Ovary (tissue), 10 donors: ENCODE measurements at regions of chr5 and their contacts with region 1.

Region 1: GRCh38 chr5:32174011-32174870 is at the start of gene GOLPH3:
- DNase-seq: peak; percentile 93 to 96 (median 95)
- H3K4me3 ChIP-seq: peak within 1 kb of the TSS; percentile 92
- H3K27ac ChIP-seq: peak within 1 kb of the TSS; percentile 99 to 100
- H3K4me1 ChIP-seq: peaks cover 4% of the 10 kb centered on the region
- H3K27me3 ChIP-seq: no peaks in the 10 kb centered on the region
- CTCF ChIP-seq: peak in 1 of 3 donors; percentile 24
- EP300 ChIP-seq: no peak
- POLR2A ChIP-seq: peak; percentile 95
- total RNA-seq, gene GOLPH3: 63.9 to 88.9 (median 81.1) TPM

Region 2: DNA sequence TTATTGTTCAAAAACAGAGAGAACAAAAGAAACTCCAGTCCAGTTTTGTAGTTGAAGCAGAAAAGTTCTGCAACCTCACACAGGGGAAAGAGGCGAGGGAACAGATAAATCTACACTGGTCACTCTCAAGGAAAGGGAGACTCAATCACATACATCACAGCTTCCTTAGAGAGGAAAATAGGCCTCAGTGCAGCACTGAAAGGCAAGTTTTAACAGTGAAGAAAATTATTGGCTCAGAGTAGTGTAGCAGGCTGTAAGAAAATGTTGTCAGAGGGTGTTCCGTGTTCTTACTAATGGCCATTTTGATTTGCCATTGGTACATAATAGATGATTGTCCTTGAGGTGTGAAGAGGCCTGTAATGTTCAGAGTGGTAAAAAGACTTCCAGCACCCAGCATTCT is 1510.7 kb before region 1 on chr5:
- intact Hi-C with region 1: no loop called
- DNase-seq: no peak
- H3K4me3 ChIP-seq: no peak overlapping the region
- H3K27ac ChIP-seq: no peak overlapping the region
- H3K4me1 ChIP-seq: no peaks in the 10 kb centered on the region
- H3K27me3 ChIP-seq: no peaks in the 10 kb centered on the region
- CTCF ChIP-seq: no peak
- EP300 ChIP-seq: no peak
- POLR2A ChIP-seq: no peak

Region 3: GRCh38 chr5:32092938-32093812 is 81.1 kb before region 1 on chr5:
- intact Hi-C with region 1: loop called in 2 of 4 experiments (anchors 5 kb)
- DNase-seq: peak; percentile 59 to 83 (median 73)
- H3K4me3 ChIP-seq: no peak overlapping the region
- H3K27ac ChIP-seq: no peak overlapping the region
- H3K4me1 ChIP-seq: peaks cover 22% of the 10 kb centered on the region
- H3K27me3 ChIP-seq: no peaks in the 10 kb centered on the region
- CTCF ChIP-seq: peak; percentile 32 to 90 (median 87)
- EP300 ChIP-seq: no peak
- POLR2A ChIP-seq: no peak

Region 4: DNA sequence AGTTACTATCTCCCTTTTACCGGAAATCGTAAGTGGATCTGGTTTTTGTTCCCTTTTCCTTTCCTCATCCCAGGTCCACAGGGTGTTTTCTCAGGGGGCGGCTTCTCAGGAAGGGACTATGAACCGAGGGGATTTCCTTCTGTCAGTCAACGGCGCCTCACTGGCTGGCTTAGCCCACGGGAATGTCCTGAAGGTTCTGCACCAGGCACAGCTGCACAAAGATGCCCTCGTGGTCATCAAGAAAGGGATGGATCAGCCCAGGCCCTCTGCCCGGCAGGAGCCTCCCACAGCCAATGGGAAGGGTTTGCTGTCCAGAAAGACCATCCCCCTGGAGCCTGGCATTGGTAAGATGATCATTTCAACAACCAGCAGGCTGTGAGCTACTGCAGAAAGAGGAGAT is 76.0 kb before region 1 on chr5:
- intact Hi-C with region 1: loop called in 2 of 4 experiments (anchors 5 kb)
- DNase-seq: no peak
- H3K4me3 ChIP-seq: no peak overlapping the region
- H3K27ac ChIP-seq: peak overlapping the region; percentile 34 to 63
- H3K4me1 ChIP-seq: peaks cover 20% of the 10 kb centered on the region
- H3K27me3 ChIP-seq: no peaks in the 10 kb centered on the region
- CTCF ChIP-seq: no peak
- EP300 ChIP-seq: no peak
- POLR2A ChIP-seq: no peak

Region 5: DNA sequence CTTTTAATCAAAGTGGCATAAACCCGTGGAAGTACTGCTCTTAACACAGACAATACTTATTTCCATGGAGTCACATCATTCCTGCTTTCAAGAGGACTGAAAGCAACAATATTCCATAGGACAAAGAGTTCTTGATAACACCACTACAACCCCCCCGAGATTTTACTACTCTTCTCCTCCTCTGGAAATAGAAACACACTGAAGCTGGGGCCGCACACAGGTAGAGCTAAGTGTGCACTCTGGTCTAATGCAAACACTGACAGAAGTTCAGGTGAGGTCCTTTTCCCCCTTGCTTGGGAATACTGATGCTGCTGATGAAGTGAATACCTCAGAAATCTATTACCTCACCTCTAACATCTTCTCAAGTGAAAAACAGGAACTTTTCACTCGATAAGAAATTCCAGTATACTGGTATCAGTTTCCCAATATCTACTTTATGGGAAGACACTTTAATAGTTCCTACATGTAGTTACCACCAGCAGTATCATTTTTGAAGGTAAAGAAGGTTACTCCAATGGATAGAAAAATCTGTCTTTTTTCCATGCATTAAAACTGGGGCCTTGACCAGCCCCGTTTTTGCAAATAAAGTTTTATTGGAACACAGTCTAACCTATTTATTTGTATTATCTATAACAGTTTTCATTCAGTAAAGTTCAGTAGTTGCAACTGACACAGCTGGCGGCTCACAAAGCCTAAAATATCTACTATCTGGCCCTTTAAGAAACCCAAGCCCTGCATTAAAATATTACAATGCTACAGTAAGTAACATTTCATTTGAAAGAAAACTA is 50.2 kb before region 1 on chr5:
- intact Hi-C with region 1: loop called in 1 of 4 experiments (anchors 2 kb)
- DNase-seq: no peak
- H3K4me3 ChIP-seq: no peak overlapping the region
- H3K27ac ChIP-seq: no peak overlapping the region
- H3K4me1 ChIP-seq: peaks cover 6% of the 10 kb centered on the region
- H3K27me3 ChIP-seq: no peaks in the 10 kb centered on the region
- CTCF ChIP-seq: no peak
- EP300 ChIP-seq: no peak
- POLR2A ChIP-seq: no peak

Region 6: DNA sequence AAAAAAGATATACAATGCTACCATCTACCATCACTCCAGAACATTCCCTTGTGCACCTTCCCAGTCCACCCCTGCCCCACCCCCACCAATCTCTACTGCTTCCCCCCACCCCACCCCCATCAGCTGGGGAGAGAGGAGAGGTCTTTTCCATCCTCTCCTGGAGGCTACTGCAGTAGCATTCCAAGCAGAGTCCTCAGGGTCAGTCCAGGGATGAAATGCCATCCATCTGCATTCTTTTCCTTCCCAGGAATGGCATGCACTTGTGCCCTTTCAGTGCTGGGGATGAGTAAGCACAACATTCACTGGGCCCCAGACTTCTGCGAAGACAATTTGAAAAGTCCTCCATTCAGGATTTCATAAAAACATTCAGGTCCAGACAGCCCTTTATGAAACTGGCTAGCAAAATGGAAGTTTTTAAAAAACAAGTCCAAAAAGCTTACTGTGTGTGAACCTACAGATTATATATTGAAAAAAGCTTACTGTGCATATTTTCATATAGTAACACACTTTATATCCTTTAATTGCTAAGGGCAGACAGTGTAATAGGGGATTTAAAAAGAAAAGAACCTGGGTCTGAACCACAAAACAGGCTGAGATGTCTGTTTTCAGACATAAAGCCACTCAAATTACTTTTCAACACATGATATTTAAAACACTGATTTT is 49.8 kb after region 1 on chr5:
- intact Hi-C with region 1: loop called in 1 of 4 experiments (anchors 10 kb)
- DNase-seq: no peak
- H3K4me3 ChIP-seq: no peak overlapping the region
- H3K27ac ChIP-seq: no peak overlapping the region
- H3K4me1 ChIP-seq: peaks cover 8% of the 10 kb centered on the region
- H3K27me3 ChIP-seq: no peaks in the 10 kb centered on the region
- CTCF ChIP-seq: no peak
- EP300 ChIP-seq: no peak
- POLR2A ChIP-seq: no peak

Region 7: DNA sequence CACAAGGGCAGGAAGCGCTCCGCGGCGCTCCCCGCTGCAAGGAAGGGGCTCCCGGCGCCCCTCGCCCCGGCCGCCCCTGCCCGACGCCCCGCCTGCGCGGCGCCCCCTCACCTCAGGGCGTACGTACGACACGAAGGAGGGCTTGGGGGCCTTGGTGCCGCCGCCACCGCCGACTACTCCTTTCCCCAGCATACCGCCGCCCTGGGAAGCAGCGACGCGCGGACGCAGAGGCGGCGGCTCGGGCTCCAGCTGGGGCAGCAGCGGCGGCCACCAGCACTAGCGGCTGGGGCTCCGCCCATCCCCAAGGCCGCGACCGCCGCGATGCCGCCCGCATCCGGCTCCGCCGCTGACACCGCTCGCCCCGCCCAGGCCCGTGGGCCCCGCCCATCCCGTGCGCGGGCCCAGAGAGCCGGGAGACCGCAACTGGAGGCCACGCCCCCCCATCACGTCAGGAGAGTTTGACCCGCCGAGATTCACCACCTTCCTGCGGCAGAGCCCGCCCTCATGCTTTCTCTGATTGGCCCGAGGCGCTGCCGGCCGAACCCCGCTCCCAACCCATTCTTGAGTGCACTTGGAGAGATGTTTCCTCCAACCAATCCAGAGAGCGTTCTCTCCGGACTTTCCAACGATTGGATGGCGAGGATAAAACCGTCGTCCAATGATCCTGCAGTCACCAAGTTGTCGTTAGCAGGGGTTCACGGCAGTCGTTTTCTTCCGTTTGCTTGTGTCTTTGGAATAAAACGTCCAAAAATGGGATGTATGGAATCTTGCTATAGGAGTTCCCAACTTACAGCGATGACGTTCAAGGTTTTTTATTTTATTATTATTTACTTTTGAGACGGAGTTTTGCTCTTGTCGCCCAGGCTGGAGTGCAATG is 138.6 kb after region 1 on chr5 and contains the start of gene MTMR12:
- intact Hi-C with region 1: loop called in 1 of 4 experiments (anchors 5 kb)
- DNase-seq: peak; percentile 100
- H3K4me3 ChIP-seq: peak within 1 kb of the TSS; percentile 89
- H3K27ac ChIP-seq: peak within 1 kb of the TSS; percentile 93 to 96
- H3K4me1 ChIP-seq: peaks cover 15% of the 10 kb centered on the region
- H3K27me3 ChIP-seq: no peaks in the 10 kb centered on the region
- CTCF ChIP-seq: no peak
- EP300 ChIP-seq: no peak
- POLR2A ChIP-seq: peak; percentile 86
- total RNA-seq, gene MTMR12: 33.1 to 39.0 (median 36.1) TPM